ENCODE measurements at regions of chr5 and their contacts with region 1.

Region 1: GRCh38 chr5:160418561-160419457 is at the start of gene SLU7:
- DNase-seq: peak; percentile 96
- ATAC-seq: peak; percentile 80
- H3K4me3 Mint-ChIP-seq: peak within 1 kb of the TSS; percentile 96
- H3K27ac Mint-ChIP-seq: peak within 1 kb of the TSS; percentile 99
- H3K4me1 Mint-ChIP-seq: peaks cover 57% of the 10 kb centered on the region
- H3K27me3 Mint-ChIP-seq: no peaks in the 10 kb centered on the region
- total RNA-seq, gene SLU7: 41.1 to 53.0 TPM

Region 2: DNA sequence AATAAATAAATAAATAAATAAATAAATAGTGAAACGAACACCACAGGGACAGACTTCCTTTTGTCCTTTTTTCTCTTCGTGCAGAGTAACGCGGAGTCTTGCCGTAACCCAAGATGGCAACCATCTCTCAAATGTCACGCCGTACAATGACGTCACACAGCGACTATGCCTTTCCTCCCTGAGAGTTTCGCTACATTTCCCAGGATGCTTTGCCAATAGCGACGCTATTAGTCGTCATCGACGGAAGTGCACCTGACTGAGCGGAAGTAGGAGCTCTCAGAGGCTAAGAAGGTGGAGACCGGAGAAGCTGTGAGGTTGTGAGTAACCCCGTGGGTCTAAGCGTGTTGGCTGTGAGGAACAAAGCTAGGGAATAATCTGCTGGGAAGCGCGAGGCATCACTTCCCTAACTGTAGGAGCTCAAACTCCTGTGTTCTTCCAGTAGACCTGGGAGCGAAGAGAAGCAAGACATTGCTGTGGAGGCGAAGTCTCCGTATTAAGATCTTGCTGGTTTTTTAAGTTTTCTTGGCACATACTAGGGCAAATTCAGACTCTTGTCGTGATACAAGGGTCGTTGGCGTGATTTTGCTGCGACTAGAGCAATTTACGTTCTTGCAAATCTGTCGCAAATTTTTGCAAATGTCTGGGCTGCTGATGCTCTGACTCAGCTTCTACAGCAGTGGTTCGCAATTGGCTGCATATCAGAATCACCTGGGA is 409.8 kb before region 1 on chr5 and contains the start of gene TTC1:
- CTCF ChIA-PET with region 1: no interaction called
- POLR2A ChIA-PET with region 1: interaction called, 8 read pairs
- intact Hi-C with region 1: loop called in 1 of 2 experiments (anchors 5 kb)
- DNase-seq: peak; percentile 95
- ATAC-seq: peak; percentile 98
- H3K4me3 Mint-ChIP-seq: peak within 1 kb of the TSS; percentile 92
- H3K27ac Mint-ChIP-seq: peak within 1 kb of the TSS; percentile 96
- H3K4me1 Mint-ChIP-seq: peaks cover 26% of the 10 kb centered on the region
- H3K27me3 Mint-ChIP-seq: no peaks in the 10 kb centered on the region
- total RNA-seq, gene TTC1: 60.6 to 63.1 TPM

Region 3: DNA sequence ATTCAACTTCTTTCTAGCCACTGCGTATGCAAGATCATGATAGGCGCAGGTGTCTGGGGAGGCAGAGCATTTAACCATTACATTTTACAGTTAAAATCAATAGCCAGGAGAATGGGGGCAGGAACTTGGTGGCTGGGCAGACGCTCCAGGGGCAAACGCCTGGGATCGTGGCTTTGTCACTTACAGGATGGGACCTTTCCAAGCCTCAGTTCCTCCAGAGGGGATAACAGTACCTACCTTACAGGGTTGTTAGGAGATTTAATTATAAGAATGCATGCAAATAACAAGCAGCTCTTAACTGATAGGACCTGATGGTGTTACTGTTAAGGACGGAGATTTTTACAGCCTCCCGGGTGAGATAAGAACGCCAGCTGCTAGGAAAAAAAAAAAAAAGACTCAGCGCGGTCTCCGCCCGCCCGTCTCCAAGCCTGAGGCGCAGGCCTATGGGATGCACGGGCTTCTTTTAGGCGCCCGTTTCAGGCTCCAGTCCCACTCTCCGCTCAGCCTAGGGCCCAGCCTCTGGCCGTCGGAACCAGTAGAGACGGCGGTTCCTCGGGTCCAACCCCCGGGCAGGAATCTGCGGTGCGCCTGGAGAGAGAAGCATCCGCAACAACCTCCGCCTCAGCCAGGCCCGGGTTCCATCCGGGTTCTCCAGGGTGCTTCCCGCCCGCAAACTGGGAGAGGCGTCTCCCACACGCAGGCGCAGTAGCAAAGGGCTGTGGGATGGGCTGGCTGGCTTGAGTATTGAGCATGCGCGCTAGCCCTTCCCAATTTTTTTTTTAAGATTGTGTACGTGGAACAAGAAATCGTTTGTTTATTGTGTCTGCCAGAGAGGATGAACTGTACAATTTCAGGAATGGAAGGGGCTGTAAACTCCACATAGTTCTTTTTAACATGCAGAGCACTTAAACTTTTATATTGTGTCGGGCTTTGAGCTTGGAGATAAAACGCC is 19.1 kb before region 1 on chr5 and contains the start of gene FAM200C:
- CTCF ChIA-PET with region 1: interaction called, 3 read pairs
- POLR2A ChIA-PET with region 1: interaction called, 3 read pairs
- intact Hi-C with region 1: loop called (anchors 1 to 2 kb)
- DNase-seq: peak; percentile 83
- ATAC-seq: peak; percentile 87
- H3K4me3 Mint-ChIP-seq: peak within 1 kb of the TSS; percentile 86
- H3K27ac Mint-ChIP-seq: peak within 1 kb of the TSS; percentile 86
- H3K4me1 Mint-ChIP-seq: peaks cover 19% of the 10 kb centered on the region
- H3K27me3 Mint-ChIP-seq: no peaks in the 10 kb centered on the region
- total RNA-seq, gene FAM200C: 0.91 to 1.3 TPM